ENCODE measurements at regions of chr16 and their contacts with region 1.

Region 1: GRCh38 chr16:81035398-81035974 is at the start of gene ATMIN:
- DNase-seq: peak; percentile 85 to 93 (median 89)
- ATAC-seq: peak; percentile 74 to 96 (median 93)
- H3K4me3 ChIP-seq: peak within 1 kb of the TSS; percentile 68 to 92 (median 80)
- H3K27ac ChIP-seq: peak within 1 kb of the TSS; percentile 46 to 85 (median 82)
- H3K4me1 ChIP-seq: peaks cover 0 to 37% (median 24%) of the 10 kb centered on the region in 12 donors
- H3K27me3 ChIP-seq: no peaks in the 10 kb centered on the region
- CTCF ChIP-seq: peak; percentile 83 to 99 (median 96)
- POLR2A ChIP-seq: peak in 1 of 2 donors; percentile 21
- total RNA-seq, gene ATMIN: 22.3 to 36.0 (median 28.5) TPM

Region 2: DNA sequence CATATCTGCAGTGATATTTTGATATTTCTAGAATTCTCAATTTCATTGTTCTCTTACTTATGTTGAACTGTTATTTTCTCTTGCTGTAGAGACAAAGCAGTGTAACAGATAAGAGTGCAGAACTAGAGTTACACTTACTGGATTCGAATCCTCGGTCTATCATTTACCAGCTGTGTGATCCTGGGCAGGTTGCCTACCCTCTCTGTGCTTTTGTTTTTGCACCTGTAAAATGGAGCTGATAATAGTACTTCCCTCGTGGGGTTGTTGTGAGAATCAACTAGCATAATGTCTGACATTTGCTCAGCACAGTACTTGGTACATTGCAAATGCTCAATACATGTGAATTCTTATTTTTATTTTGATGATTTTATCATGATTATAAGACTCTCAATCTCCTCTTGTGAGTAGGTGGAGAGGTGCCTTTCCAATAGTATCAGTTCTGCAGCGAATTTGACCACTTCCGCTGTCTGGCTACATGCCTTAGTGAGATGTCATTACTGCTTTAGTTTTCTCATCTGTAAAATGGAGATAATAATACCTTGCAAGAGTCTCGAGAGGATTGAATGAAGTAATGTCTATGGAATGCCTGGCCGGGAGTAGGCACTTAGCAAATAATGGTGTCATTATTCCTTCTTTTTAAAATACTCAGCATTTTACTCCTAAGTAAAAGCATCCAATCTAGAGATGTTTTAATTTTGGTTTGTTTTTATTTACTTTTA is 1122.7 kb before region 1 on chr16:
- intact Hi-C with region 1: no loop called
- DNase-seq: no peak
- ATAC-seq: no peak
- H3K4me3 ChIP-seq: no peak overlapping the region
- H3K27ac ChIP-seq: no peak overlapping the region
- H3K4me1 ChIP-seq: no peaks in the 10 kb centered on the region
- H3K27me3 ChIP-seq: no peaks in the 10 kb centered on the region
- CTCF ChIP-seq: no peak
- POLR2A ChIP-seq: no peak

Region 3: GRCh38 chr16:81006814-81007696 is 28.4 kb before region 1 on chr16 and contains the starts of genes CENPN and CMC2:
- intact Hi-C with region 1: loop called in 2 of 10 experiments (anchors 1 to 2 kb)
- DNase-seq: peak; percentile 98 to 100 (median 99)
- ATAC-seq: peak; percentile 95 to 96 (median 96)
- H3K4me3 ChIP-seq: peak within 1 kb of the TSS; percentile 65 to 100 (median 94)
- H3K27ac ChIP-seq: peak within 1 kb of the TSS; percentile 90 to 100 (median 99)
- H3K4me1 ChIP-seq: peaks cover 0 to 41% (median 21%) of the 10 kb centered on the region in 12 donors
- H3K27me3 ChIP-seq: no peaks in the 10 kb centered on the region
- CTCF ChIP-seq: peak in 2 of 12 donors; percentile 20
- POLR2A ChIP-seq: peak; percentile 74
- total RNA-seq, gene CENPN: 7.0 to 14.8 (median 10.3) TPM
- total RNA-seq, gene CMC2: 89.0 to 182 (median 132) TPM

Region 4: DNA sequence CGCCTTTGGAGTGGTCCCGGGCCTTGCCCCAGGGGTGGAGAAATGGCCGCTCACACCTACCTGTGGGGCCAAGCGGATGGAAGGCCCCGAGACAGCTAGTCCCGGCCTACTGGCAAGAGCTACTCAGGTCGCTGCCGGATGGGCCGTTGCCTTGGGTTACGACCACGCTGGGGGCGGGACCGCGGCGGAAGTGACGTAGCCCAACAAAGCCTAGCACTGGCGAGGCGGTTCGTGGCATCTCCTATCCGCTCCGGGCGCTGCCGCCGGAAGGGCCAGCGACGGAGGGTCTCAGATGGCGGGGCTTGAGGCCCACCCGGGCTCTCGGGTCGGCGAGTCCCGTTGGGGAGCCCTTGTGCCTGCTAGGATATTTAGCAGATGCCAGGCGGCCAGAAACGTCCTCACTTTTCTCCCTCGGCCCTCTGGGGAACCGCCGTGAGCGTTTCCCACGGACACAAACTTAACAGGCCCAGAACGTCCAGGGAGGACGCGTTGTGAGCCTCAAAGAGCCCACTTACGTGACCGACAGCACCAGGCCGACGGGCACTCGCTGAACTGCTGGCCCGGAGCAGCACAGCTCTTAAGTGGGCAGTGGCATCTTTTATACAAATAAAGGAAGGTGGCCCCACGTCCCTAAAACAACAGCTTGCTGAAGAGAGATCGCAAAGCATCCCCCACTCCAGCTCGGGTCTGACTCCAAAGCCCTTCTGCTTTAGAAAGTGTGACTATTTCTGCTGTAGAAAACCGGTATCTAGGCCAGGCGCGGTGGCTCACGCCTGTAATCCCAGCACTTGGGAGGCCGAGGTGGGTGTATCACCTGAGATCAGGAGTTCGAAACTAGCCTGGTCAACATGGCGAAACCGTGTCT is 41.8 kb after region 1 on chr16 and contains the start of gene C16orf46:
- intact Hi-C with region 1: loop called in 9 of 10 experiments (anchors 1 to 5 kb)
- DNase-seq: peak; percentile 97 to 99 (median 97)
- ATAC-seq: peak; percentile 98 to 99 (median 99)
- H3K4me3 ChIP-seq: peak within 1 kb of the TSS; percentile 63 to 90 (median 77)
- H3K27ac ChIP-seq: peak within 1 kb of the TSS; percentile 58 to 99 (median 97)
- H3K4me1 ChIP-seq: peaks cover 0 to 14% (median 6%) of the 10 kb centered on the region in 12 donors
- H3K27me3 ChIP-seq: no peaks in the 10 kb centered on the region
- CTCF ChIP-seq: no peak
- POLR2A ChIP-seq: peak; percentile 16 to 88
- total RNA-seq, gene C16orf46: 0.34 to 1.4 (median 0.63) TPM in 6 of 9 donors, not detected in the others

Region 5: DNA sequence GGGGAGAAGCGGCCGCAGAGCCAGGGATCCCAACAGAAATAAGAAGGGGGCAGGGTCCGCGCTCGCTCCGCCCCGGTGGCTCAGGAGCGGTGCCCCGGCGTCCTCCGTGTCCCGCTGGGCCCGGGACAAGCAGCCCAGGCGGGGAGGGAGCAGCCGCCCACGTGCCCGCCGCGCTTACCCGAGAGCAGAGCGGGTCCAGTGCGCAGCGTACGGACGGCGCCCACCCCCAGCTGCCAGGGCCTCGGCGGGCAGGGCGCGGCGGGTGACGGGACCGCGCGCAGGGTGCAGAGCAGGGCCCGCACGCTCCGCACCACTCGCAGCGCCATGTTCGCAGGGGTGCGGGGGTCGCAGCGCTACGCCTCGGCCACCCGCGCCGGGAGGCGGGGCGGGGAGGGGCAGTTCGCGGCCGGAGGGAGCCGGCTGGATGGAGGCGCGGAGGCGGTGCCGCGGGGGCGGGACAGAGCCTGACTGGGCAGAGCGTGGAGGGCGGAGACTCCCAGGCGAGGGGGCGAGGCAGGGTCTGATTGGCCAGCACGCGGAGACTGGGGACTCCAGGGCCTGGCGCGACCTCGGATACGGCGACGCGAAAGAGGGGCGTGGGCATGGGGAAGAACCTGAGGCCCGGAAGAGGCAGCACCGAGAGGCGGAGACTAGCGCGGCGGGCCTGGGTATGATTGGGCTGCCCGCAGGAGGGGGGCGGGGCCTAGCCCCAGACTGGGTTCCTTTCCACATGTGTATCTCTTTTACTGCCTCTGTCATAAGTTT is 60.6 kb after region 1 on chr16 and contains the start of gene GCSH:
- intact Hi-C with region 1: loop called in 2 of 10 experiments (anchors 5 to 10 kb)
- DNase-seq: peak; percentile 100
- ATAC-seq: peak; percentile 99 to 100 (median 100)
- H3K4me3 ChIP-seq: peak within 1 kb of the TSS; percentile 50 to 97 (median 78)
- H3K27ac ChIP-seq: peak within 1 kb of the TSS; percentile 40 to 86 (median 71)
- H3K4me1 ChIP-seq: peaks cover 0 to 14% (median 2%) of the 10 kb centered on the region in 12 donors
- H3K27me3 ChIP-seq: no peaks in the 10 kb centered on the region
- CTCF ChIP-seq: no peak
- POLR2A ChIP-seq: peak in 1 of 2 donors; percentile 48
- total RNA-seq, gene GCSH: 22.3 to 51.2 (median 40.1) TPM

Region 6: GRCh38 chr16:81117436-81117835 is 82.0 kb after region 1 on chr16:
- intact Hi-C with region 1: no loop called
- DNase-seq: peak in 1 of 5 donors; percentile 44
- ATAC-seq: no peak
- H3K4me3 ChIP-seq: no peak overlapping the region
- H3K27ac ChIP-seq: no peak overlapping the region
- H3K4me1 ChIP-seq: no peaks in the 10 kb centered on the region
- H3K27me3 ChIP-seq: no peaks in the 10 kb centered on the region
- CTCF ChIP-seq: no peak
- POLR2A ChIP-seq: no peak

Region 7: DNA sequence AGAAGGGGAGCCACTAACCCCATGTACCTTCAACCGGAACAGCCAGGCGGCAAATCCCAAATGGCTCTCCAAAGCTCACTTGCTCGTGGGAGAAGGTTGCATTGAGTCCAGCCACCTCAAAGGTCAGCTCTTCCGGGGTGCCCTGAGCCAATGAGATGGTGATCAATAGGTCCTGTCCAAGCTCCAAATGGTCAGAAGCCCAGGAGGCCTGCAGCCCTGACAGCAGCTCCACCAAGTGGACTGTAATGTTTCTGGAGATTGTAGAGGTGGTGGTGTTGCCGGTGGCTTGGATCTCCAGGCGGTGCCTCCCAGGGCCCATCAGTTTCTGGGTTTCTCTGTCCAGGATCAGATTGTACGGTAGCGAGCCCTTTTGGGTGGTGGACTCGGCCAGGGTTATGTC is 163.1 kb after region 1 on chr16:
- intact Hi-C with region 1: loop called in 2 of 10 experiments (anchors 5 to 10 kb)
- DNase-seq: no peak
- ATAC-seq: no peak
- H3K4me3 ChIP-seq: no peak overlapping the region
- H3K27ac ChIP-seq: no peak overlapping the region
- H3K4me1 ChIP-seq: no peaks in the 10 kb centered on the region
- H3K27me3 ChIP-seq: peaks cover 0 to 13% (median 0%) of the 10 kb centered on the region in 9 donors
- CTCF ChIP-seq: peak in 3 of 12 donors; percentile 8 to 26 (median 11)
- POLR2A ChIP-seq: no peak

Region 8: DNA sequence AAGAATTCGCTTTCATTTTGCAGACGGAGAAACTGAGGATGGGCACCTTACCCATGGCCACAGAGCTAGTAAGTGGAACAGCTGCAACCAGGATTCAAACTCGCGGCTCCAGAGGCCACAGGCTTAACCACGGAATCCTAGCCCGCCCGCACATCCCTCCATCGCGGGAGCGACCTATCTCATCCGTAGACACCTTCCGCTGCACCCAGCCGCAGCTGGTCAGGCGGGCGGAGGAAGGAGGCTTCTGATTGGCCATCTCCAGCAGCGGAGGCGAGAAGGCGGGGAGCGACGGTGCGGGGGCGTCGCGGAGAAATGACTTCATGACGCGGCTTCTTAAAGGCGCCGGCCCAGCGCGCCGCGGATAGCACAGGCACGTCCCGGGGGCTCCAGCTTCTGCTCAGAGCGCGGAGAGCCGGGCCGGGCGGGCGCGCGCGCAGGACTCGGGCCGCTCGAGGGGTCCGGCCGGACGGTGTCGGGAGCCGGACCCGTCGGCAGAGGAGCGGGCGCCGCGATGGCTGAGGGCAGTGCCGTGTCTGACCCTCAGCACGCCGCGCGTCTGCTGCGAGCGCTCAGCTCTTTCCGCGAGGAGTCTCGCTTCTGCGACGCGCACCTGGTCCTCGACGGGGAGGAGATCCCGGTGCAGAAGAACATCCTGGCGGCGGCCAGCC is 279.3 kb after region 1 on chr16 and contains the start of gene GAN:
- intact Hi-C with region 1: loop called in 1 of 10 experiments (anchors 10 kb)
- DNase-seq: peak; percentile 95 to 97 (median 96)
- ATAC-seq: peak; percentile 98 to 100 (median 99)
- H3K4me3 ChIP-seq: peak within 1 kb of the TSS; percentile 56 to 94 (median 89)
- H3K27ac ChIP-seq: peak within 1 kb of the TSS; percentile 64 to 96 (median 88)
- H3K4me1 ChIP-seq: peaks cover 0 to 38% (median 22%) of the 10 kb centered on the region in 12 donors
- H3K27me3 ChIP-seq: no peaks in the 10 kb centered on the region
- CTCF ChIP-seq: no peak
- POLR2A ChIP-seq: peak; percentile 67 to 90
- total RNA-seq, gene GAN: 8.7 to 17.7 (median 13.1) TPM

Region 9: DNA sequence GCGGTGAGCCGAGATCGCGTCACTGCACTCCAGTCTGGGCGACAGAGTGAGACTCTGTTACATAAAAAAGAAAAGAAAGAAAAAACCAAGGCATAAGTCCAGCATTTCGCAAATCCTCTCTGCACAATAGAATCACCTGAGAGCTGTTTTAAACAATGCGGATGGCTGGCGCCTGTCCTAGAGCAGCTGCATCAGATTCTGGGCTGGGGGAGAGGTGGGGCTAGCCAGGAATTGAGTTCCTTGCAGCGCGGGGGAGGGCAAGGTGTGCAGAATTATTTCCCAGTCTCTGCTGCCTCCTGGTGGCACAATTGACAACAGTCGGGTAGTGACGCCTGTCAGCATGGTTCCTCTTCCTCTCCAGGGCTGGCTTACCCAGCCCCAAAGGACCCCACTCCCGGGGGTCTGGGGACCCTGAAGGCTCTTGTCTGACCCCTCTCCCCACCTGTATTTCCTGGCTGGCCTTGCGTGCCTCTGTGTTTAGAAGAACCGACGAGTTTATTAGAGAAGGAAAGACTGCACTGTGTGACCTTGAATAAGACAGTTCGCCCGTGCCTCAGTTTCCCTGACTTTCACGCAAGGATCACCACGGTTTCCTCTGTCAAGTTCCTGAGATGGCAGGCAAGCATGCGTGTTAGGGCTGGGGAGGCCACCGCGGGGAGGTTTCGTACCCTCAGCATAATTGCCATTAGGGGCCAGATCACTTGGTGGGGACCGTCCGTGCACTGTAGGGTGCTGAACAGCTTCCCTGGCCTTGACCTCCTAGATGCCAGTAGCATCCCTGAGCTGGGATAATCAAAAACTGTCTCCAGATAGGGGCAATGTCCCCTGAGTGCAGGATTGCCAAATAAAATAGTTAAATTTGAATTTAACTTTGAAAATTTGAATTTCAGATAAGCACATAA is 702.6 kb after region 1 on chr16:
- intact Hi-C with region 1: loop called in 6 of 10 experiments (anchors 5 to 10 kb)
- DNase-seq: peak; percentile 79 to 83 (median 82)
- ATAC-seq: peak; percentile 89 to 96 (median 93)
- H3K4me3 ChIP-seq: peak overlapping the region in 10 of 12 donors; percentile 2 to 44 (median 29)
- H3K27ac ChIP-seq: peak overlapping the region in 5 of 12 donors; percentile 20 to 52 (median 33)
- H3K4me1 ChIP-seq: peaks cover 0 to 14% (median 4%) of the 10 kb centered on the region in 12 donors
- H3K27me3 ChIP-seq: peaks cover 0 to 2% (median 0%) of the 10 kb centered on the region in 9 donors
- CTCF ChIP-seq: peak; percentile 75 to 91 (median 82)
- POLR2A ChIP-seq: no peak

Measured in heart left ventricle (tissue), 16 donors.